Ascending aorta (tissue), 2 donors: ENCODE measurements at regions of chr14 and their contacts with region 1.

Region 1: DNA sequence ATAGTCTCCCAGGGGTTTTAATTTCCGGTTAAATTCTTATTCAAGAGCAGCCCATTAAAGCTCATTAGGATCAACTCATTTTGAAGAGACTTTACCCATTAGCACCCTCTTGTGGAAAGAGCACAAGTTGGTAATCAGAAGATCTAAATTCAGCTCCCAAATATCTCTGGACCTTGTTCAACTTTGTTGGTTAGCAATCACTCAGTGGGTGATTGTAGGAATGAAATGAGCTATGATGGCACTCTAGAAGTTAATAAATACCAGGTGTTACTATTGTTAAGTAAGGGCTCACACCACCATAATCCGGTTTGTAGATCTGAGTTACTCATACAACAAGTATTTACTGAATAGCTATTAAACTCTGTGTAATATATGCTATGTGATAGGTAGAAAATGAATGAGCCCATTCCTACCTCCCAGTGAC is 42.9 kb downstream of the TRIP11 start:
- DNase-seq: no peak
- H3K4me3 ChIP-seq: no peak overlapping the region
- H3K27ac ChIP-seq: peak overlapping the region in 1 of 2 donors; percentile 63
- H3K4me1 ChIP-seq: peaks cover 0 to 9% of the 10 kb centered on the region in 2 donors
- H3K27me3 ChIP-seq: no peaks in the 10 kb centered on the region
- CTCF ChIP-seq: peak; percentile 31 to 74 (median 61)

Region 2: GRCh38 chr14:91649930-91650329 is 347.0 kb before region 1 on chr14:
- intact Hi-C with region 1: loop called (anchors 5 kb)
- DNase-seq: no peak
- H3K4me3 ChIP-seq: no peak overlapping the region
- H3K27ac ChIP-seq: no peak overlapping the region
- H3K4me1 ChIP-seq: no peaks in the 10 kb centered on the region
- H3K27me3 ChIP-seq: no peaks in the 10 kb centered on the region
- CTCF ChIP-seq: peak; percentile 17 to 70 (median 51)

Region 3: DNA sequence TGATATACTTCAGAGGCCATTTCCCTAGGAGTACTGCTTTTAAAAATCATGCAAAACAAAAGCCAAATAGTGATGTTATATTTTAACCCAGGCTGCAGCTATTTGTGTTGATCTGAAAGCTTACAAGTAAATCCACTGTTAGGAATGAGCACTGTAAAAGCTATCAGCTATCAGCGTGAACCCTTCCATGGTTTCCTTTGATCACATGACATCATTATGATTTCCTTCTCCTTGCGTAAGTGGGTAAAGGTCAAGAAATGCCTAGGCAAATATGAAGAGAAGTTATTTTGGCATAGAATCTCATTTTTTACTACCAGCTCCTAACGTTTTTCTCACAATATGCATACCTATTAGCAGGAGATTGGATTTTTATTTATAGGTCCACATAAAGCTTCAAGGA is 216.5 kb before region 1 on chr14:
- intact Hi-C with region 1: loop called (anchors 10 kb)
- DNase-seq: no peak
- H3K4me3 ChIP-seq: no peak overlapping the region
- H3K27ac ChIP-seq: no peak overlapping the region
- H3K4me1 ChIP-seq: no peaks in the 10 kb centered on the region
- H3K27me3 ChIP-seq: no peaks in the 10 kb centered on the region
- CTCF ChIP-seq: no peak

Region 4: DNA sequence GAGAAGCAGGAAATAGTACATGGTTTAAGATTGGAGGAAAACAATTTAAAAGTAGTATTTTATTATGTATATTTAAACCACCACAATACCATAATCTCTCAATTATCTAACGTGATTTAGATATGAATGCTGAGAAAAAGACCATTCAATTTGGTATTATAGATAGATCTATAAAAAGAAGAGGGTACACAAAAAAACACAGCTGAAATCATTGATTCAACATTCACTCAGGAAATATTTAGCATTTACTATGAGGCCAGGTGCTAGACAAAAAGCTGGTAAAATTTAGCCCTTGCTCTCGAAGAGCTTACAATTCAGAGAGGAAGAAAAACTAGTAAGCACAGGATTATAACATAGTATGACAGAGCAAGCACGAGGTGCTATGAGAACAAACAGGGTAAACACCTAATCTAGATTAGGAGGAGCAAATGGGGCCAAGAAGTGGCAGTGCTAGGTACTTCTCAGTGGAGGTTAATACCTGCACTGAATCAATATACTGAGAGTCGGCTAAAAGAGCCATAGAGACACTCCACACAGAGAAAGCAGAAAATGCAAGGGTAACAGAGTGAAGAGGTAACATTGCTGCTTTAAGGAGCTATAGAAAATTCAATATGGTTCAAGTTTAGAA is 15.3 kb after region 1 on chr14:
- intact Hi-C with region 1: no loop called
- DNase-seq: no peak
- H3K4me3 ChIP-seq: no peak overlapping the region
- H3K27ac ChIP-seq: no peak overlapping the region
- H3K4me1 ChIP-seq: no peaks in the 10 kb centered on the region
- H3K27me3 ChIP-seq: no peaks in the 10 kb centered on the region
- CTCF ChIP-seq: no peak